Activated CD4-positive, alpha-beta T cell treated with anti-CD3 and anti-CD28 coated beads for 36 hours (primary cell): ENCODE measurements at regions of chr11 and their contacts with region 1.

Region 1: GRCh38 chr11:124225471-124225870 is 15.4 kb upstream of the OR8G1 start:
- DNase-seq: no peak
- ATAC-seq: no peak
- H3K4me3 Mint-ChIP-seq: no peak overlapping the region
- H3K27ac Mint-ChIP-seq: no peak overlapping the region
- H3K4me1 Mint-ChIP-seq: no peaks in the 10 kb centered on the region
- H3K27me3 Mint-ChIP-seq: peaks cover 4% of the 10 kb centered on the region

Region 2: GRCh38 chr11:124080327-124081001 is 145.0 kb before region 1 on chr11:
- CTCF ChIA-PET with region 1: no interaction called
- POLR2A ChIA-PET with region 1: no interaction called
- intact Hi-C with region 1: no loop called
- DNase-seq: no peak
- ATAC-seq: no peak
- H3K4me3 Mint-ChIP-seq: no peak overlapping the region
- H3K27ac Mint-ChIP-seq: no peak overlapping the region
- H3K4me1 Mint-ChIP-seq: peaks cover 7% of the 10 kb centered on the region
- H3K27me3 Mint-ChIP-seq: peaks cover 31% of the 10 kb centered on the region

Region 3: DNA sequence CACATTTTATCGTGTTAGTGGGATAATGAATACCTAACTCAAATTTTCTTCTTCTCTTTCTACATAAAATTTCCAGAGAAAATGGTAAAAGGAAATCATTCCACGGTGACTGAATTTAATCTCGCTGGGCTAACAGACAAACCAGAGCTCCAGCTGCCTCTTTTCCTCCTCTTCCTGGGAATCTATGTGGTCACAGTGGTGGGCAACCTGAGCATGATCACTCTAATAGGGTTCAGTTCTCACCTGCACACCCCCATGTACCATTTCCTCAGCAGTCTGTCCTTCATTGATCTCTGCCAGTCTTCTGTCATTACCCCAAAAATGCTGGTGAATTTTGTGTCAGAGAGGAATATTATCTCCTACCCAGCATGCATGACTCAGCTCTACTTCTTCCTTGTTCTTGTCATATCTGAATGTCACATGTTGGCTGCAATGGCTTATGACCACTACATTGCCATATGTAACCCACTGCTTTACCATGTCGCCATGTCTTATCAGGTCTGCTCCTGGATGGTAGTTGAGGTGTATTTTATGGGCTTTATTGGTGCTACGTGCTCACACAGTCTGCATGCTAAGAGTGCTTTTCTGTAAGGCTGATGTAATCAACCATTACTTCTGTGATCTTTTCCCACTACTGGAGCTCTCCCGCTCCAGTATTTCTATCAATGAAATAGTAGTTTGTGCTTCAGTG is 18.2 kb before region 1 on chr11:
- CTCF ChIA-PET with region 1: no interaction called
- POLR2A ChIA-PET with region 1: no interaction called
- intact Hi-C with region 1: loop called in 1 of 2 experiments (anchors 1 kb)
- DNase-seq: no peak
- ATAC-seq: no peak
- H3K4me3 Mint-ChIP-seq: no peak overlapping the region
- H3K27ac Mint-ChIP-seq: no peak overlapping the region
- H3K4me1 Mint-ChIP-seq: no peaks in the 10 kb centered on the region
- H3K27me3 Mint-ChIP-seq: peaks cover 2% of the 10 kb centered on the region